Transverse colon (tissue), 4 donors: ENCODE measurements at regions of chr10 and their contacts with region 1.

Region 1: GRCh38 chr10:109593682-109594081 is 329.6 kb downstream of the XPNPEP1 start:
- DNase-seq: no peak
- H3K4me3 ChIP-seq: no peak overlapping the region
- H3K27ac ChIP-seq: no peak overlapping the region
- H3K4me1 ChIP-seq: no peaks in the 10 kb centered on the region
- H3K27me3 ChIP-seq: no peaks in the 10 kb centered on the region
- CTCF ChIP-seq: no peak
- EP300 ChIP-seq: no peak
- POLR2A ChIP-seq: no peak

Region 2: GRCh38 chr10:111429340-111430028 is 1835.8 kb after region 1 on chr10:
- in situ Hi-C with region 1: no loop called
- intact Hi-C with region 1: loop called (anchors 10 kb)
- DNase-seq: no peak
- H3K4me3 ChIP-seq: no peak overlapping the region
- H3K27ac ChIP-seq: no peak overlapping the region
- H3K4me1 ChIP-seq: no peaks in the 10 kb centered on the region
- H3K27me3 ChIP-seq: no peaks in the 10 kb centered on the region
- CTCF ChIP-seq: no peak
- EP300 ChIP-seq: no peak
- POLR2A ChIP-seq: no peak